ENCODE measurements at regions of chr15 and their contacts with region 1.

Region 1: DNA sequence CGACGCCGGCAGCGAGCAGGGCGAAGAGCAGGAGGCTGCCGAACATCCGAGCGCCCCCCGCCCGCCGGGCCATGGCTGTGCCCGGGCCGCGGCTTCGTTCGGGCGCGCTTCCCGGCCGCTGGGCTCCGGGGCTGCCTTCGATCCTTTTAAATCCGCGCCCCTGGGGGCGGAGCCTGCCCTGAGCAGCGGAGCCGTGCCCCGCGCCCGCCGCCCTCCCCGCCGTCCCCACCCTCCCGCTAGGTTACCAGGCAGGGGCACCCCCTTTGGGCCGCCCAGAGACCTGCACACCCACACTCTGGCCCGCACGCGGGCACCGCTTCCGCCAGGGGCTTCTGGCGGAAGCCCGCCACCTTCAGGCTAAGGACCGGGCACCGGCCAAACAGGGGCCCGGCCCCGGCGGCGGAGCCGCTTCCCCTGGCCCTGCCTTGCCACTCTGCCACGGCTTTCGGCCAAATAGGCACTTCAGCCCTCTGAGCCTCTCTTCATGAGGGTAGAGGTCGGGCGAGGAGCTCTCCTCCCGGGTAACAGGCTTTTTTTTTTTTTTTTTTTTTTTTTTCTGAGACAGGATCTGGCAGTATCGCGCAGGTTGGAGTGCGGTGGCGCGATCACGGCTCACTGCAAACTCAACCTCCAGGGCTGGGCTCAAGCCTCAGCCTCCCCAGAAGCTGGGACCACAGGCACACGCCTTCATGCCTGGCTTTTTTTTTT is at the start of gene NMB:
- DNase-seq: no peak
- H3K4me3 ChIP-seq: peak within 1 kb of the TSS; percentile 58
- H3K27ac ChIP-seq: peak within 1 kb of the TSS; percentile 73
- H3K27me3 ChIP-seq: no peaks in the 10 kb centered on the region
- CTCF ChIP-seq: peak; percentile 72
- polyA plus RNA-seq, gene NMB: 3.3 and 3.8 TPM in 2 replicates

Region 2: GRCh38 chr15:84671211-84671610 is 13.0 kb after region 1 on chr15:
- CTCF ChIA-PET with region 1: interaction called, 15 read pairs
- POLR2A ChIA-PET with region 1: no interaction called
- DNase-seq: peak; percentile 58
- H3K4me3 ChIP-seq: no peak overlapping the region
- H3K27ac ChIP-seq: peak overlapping the region; percentile 33
- H3K27me3 ChIP-seq: no peaks in the 10 kb centered on the region
- CTCF ChIP-seq: no peak

Region 3: DNA sequence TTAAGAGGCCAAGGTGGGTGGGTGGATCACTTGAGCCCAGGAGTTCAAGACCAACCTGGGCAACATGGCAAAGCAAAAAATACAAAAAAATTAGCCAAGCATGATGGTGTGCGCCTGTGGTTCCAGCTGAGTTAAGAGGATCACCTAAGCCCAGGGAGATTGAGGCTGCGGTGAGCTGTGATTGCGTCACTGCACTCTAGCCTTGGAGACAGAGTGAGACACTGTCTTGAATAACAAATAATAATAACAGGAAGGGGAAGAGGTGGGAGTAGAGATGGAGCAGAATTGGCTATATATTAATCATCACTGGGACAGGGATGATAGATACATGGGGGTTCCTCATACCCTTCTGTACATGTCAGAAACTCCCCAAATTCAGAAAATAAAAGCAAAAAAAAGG is 23.6 kb after region 1 on chr15:
- CTCF ChIA-PET with region 1: interaction called, 11 read pairs
- POLR2A ChIA-PET with region 1: no interaction called
- DNase-seq: no peak
- H3K4me3 ChIP-seq: no peak overlapping the region
- H3K27ac ChIP-seq: no peak overlapping the region
- H3K27me3 ChIP-seq: no peaks in the 10 kb centered on the region
- CTCF ChIP-seq: no peak

Region 4: GRCh38 chr15:84761607-84762131 is 103.4 kb after region 1 on chr15:
- CTCF ChIA-PET with region 1: no interaction called
- POLR2A ChIA-PET with region 1: no interaction called
- DNase-seq: no peak
- H3K4me3 ChIP-seq: no peak overlapping the region
- H3K27ac ChIP-seq: peak overlapping the region; percentile 13
- H3K27me3 ChIP-seq: no peaks in the 10 kb centered on the region
- CTCF ChIP-seq: no peak

Region 5: GRCh38 chr15:84859155-84859554 is 200.9 kb after region 1 on chr15:
- CTCF ChIA-PET with region 1: no interaction called
- POLR2A ChIA-PET with region 1: no interaction called
- DNase-seq: no peak
- H3K4me3 ChIP-seq: no peak overlapping the region
- H3K27ac ChIP-seq: no peak overlapping the region
- H3K27me3 ChIP-seq: peaks cover 20% of the 10 kb centered on the region
- CTCF ChIP-seq: no peak

Region 6: GRCh38 chr15:85036716-85037115 is 378.5 kb after region 1 on chr15:
- CTCF ChIA-PET with region 1: interaction called, 11 read pairs
- POLR2A ChIA-PET with region 1: no interaction called
- DNase-seq: no peak
- H3K4me3 ChIP-seq: no peak overlapping the region
- H3K27ac ChIP-seq: no peak overlapping the region
- H3K27me3 ChIP-seq: no peaks in the 10 kb centered on the region
- CTCF ChIP-seq: no peak

Region 7: GRCh38 chr15:86403914-86404583 is 1745.8 kb after region 1 on chr15:
- CTCF ChIA-PET with region 1: no interaction called
- POLR2A ChIA-PET with region 1: no interaction called
- DNase-seq: no peak
- H3K4me3 ChIP-seq: no peak overlapping the region
- H3K27ac ChIP-seq: no peak overlapping the region
- H3K27me3 ChIP-seq: no peaks in the 10 kb centered on the region
- CTCF ChIP-seq: no peak